ENCODE measurements at regions of chr6 and their contacts with region 1.

Region 1: GRCh38 chr6:161498359-161498758 is 224.5 kb upstream of the AGPAT4 start:
- DNase-seq: peak; percentile 74
- H3K4me3 Mint-ChIP-seq: no peak overlapping the region
- H3K27ac Mint-ChIP-seq: peak overlapping the region; percentile 37
- H3K4me1 Mint-ChIP-seq: peaks cover 16% of the 10 kb centered on the region
- H3K27me3 Mint-ChIP-seq: peaks cover 13% of the 10 kb centered on the region
- CTCF ChIP-seq: peak; percentile 66

Region 2: DNA sequence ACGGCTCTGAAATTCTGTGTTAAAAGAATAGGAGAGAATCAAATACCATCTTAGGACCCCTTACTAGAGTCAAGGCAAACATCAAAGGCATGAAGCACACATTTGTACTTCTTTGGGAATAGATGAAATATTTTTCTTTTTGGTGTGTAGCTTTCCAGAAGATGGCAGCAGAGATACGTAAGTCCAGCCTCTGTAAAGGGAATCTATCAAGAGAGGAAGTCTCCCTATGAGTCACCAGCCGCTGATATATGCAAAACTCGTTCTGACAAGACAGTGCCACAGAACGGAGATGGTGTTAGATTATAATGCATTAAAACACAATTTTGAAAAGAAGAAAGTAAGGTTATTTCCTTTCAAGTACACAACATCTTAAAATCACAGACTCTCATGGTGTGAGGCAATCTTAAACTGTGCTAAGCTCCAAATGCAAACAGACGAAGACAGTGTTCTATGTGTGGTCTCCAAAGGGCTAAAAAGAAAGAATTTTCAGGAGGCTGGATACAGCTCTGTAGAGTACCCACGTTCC is 104.5 kb before region 1 on chr6:
- CTCF ChIA-PET with region 1: interaction called, 7 read pairs
- intact Hi-C with region 1: loop called (anchors 1 kb)
- DNase-seq: peak; percentile 55
- H3K4me3 Mint-ChIP-seq: no peak overlapping the region
- H3K27ac Mint-ChIP-seq: no peak overlapping the region
- H3K4me1 Mint-ChIP-seq: no peaks in the 10 kb centered on the region
- H3K27me3 Mint-ChIP-seq: peaks cover 12% of the 10 kb centered on the region
- CTCF ChIP-seq: peak; percentile 62

Region 3: GRCh38 chr6:161439093-161439492 is 59.3 kb before region 1 on chr6:
- CTCF ChIA-PET with region 1: interaction called, 6 read pairs
- intact Hi-C with region 1: loop called (anchors 1 kb)
- DNase-seq: peak; percentile 76
- H3K4me3 Mint-ChIP-seq: peak overlapping the region; percentile 62
- H3K27ac Mint-ChIP-seq: peak overlapping the region; percentile 55
- H3K4me1 Mint-ChIP-seq: peaks cover 29% of the 10 kb centered on the region
- H3K27me3 Mint-ChIP-seq: no peaks in the 10 kb centered on the region
- CTCF ChIP-seq: no peak

Region 4: DNA sequence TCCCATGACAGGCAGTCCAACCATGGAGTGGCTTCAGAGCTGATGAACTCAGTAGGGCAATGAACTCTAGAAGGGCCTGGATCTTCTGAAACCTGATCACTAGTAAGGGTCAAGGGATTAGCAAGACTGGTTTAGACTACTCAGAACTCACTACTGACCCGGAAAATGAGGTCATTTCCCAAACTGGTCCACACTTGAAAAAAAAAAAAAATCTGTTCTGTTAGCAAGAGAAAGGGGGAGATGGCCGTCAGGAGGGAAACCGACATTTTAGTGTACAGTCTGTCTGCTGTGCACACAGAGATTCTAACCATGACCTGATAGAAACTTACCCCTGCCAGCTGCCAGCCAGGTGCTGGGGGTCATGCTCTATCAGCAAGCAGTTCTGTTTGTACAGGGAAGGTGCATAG is 37.9 kb after region 1 on chr6:
- CTCF ChIA-PET with region 1: no interaction called
- intact Hi-C with region 1: no loop called
- DNase-seq: no peak
- H3K4me3 Mint-ChIP-seq: no peak overlapping the region
- H3K27ac Mint-ChIP-seq: no peak overlapping the region
- H3K4me1 Mint-ChIP-seq: no peaks in the 10 kb centered on the region
- H3K27me3 Mint-ChIP-seq: no peaks in the 10 kb centered on the region
- CTCF ChIP-seq: no peak

Measured in Calu3 (cell line).